ENCODE measurements at regions of chr2 and their contacts with region 1.

Region 1: GRCh38 chr2:221573430-221574230 is 1.5 kb upstream of the EPHA4 start:
- DNase-seq: peak; percentile 93
- ATAC-seq: peak; percentile 63
- H3K4me3 Mint-ChIP-seq: peak overlapping the region; percentile 96
- H3K27ac Mint-ChIP-seq: no peak overlapping the region; the same call in 1 of the 2 replicates
- H3K4me1 Mint-ChIP-seq: peaks cover 50% of the 10 kb centered on the region
- H3K27me3 Mint-ChIP-seq: peaks cover 59% of the 10 kb centered on the region
- CTCF ChIP-seq: peak; percentile 95

Region 2: GRCh38 chr2:221372159-221372884 is 201.3 kb before region 1 on chr2:
- CTCF ChIA-PET with region 1: interaction called, 17 read pairs
- POLR2A ChIA-PET with region 1: no interaction called
- DNase-seq: peak; percentile 62
- ATAC-seq: peak; percentile 96
- H3K4me3 Mint-ChIP-seq: peak overlapping the region; percentile 56
- H3K27ac Mint-ChIP-seq: peak overlapping the region; percentile 90
- H3K4me1 Mint-ChIP-seq: peaks cover 29% of the 10 kb centered on the region
- H3K27me3 Mint-ChIP-seq: no peaks in the 10 kb centered on the region
- CTCF ChIP-seq: no peak; the same call in 1 of the 2 replicates

Region 3: DNA sequence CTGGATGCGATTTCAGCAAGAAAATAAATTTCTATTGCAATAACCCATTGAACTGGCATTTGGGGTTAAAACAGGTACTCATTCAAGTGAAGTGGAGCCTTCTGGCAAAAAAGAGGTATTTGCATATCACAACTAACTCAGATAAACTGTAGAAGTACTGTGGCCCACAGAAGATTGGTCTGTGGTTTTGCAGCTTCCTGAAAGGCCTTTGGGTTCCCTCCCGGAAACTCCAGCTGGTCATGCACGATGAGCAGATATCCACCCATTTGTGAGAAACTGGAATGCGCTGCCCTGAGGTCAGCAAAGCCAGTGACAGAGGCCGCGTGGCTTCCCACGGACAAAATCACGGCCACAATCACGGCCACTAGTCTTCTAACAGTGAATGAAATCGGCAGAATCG is 107.9 kb before region 1 on chr2:
- CTCF ChIA-PET with region 1: no interaction called
- POLR2A ChIA-PET with region 1: no interaction called
- DNase-seq: no peak
- ATAC-seq: no peak
- H3K4me3 Mint-ChIP-seq: no peak overlapping the region
- H3K27ac Mint-ChIP-seq: no peak overlapping the region
- H3K4me1 Mint-ChIP-seq: peaks cover 32% of the 10 kb centered on the region
- H3K27me3 Mint-ChIP-seq: peaks cover 79% of the 10 kb centered on the region
- CTCF ChIP-seq: no peak

Region 4: DNA sequence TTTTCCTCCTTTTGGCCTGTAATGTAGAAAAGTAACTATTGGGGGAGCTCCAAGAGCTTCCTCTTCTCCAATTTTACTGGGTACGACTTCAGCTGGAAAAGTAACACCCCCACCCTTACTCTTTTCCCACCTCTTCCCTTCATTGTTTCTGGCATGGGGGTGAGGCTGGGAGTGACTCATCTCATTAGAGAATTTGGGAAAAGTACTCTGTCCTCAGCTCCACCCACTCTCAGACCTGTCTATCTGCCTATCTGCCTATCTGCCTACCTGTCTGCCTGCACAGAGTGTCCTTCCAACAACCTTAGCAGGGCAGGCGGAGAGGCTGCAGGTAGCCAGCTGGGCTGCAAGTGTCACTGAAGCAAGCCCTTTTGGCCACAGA is 95.2 kb before region 1 on chr2:
- CTCF ChIA-PET with region 1: interaction called, 11 read pairs
- POLR2A ChIA-PET with region 1: no interaction called
- DNase-seq: no peak
- ATAC-seq: peak; percentile 92
- H3K4me3 Mint-ChIP-seq: no peak overlapping the region
- H3K27ac Mint-ChIP-seq: no peak overlapping the region
- H3K4me1 Mint-ChIP-seq: peaks cover 19% of the 10 kb centered on the region
- H3K27me3 Mint-ChIP-seq: peaks cover 3% of the 10 kb centered on the region; the same call in 1 of the 2 replicates
- CTCF ChIP-seq: no peak